Head of caudate nucleus (tissue), 42 donors: ENCODE measurements at regions of chr10 and their contacts with region 1.

Region 1: DNA sequence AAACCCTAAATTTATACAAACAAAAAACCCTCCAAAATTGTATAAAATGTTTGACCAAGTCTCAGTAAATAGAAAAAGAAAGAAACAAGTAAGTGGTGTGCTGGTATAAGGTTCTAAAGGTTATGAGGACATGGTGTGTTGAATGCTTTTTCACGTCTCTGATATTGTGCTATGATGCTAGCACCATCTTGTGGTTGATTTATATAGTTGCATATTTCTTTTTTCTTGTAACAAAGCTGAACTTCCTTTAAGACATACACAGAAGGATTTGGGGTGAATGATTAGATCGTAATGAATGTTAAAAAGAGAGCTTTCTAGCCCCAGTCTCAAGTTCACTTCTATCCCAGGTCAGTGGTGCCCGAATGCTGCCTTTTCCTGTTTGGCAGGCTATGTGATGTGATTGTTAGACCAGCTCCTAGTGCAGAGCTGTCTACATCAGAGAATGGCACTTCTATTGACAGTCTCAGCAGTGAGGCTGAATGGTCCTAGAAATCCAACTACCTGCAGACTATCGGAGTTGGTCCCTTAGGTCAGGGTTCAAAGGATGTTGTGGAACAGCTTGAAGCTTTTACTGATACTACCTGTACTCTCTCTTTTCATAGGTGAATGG is 25.0 kb downstream of the VTI1A start:
- DNase-seq: peak in 3 of 42 donors; percentile 10 to 15 (median 14)

Region 2: DNA sequence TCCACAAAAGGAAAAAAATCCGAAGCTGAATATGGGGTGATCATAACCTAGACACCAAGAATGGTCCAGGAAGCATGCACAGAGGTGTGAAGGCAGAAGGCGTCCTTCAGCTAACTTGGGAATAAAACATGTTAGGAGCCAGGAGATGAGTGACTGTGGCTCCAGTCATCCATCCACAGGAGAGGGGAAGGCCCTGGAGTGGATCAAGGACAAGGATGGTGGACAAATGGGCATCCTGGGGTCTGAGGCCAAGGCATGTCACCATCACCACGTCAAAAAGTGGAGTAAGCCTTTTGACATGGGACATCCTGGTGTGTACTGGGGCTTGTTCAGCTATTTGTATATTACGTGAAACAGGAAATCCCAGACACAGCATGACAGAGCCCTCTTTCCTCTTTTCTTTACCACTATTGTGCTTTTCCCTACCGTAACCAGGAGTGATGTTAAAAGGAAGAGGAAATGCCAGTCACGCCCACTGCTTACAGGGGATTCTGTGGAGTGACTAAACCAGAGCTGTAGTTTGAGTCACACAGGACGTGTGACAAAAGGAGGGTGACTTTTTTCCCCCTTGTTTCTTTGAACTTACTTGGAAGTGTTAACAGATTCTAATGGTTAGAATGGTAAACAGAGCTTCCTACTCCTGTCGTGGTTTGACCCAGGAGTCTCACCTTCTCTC is 82.7 kb before region 1 on chr10:
- intact Hi-C with region 1: no loop called
- DNase-seq: peak in 16 of 42 donors; percentile 9 to 71 (median 26)

Region 3: DNA sequence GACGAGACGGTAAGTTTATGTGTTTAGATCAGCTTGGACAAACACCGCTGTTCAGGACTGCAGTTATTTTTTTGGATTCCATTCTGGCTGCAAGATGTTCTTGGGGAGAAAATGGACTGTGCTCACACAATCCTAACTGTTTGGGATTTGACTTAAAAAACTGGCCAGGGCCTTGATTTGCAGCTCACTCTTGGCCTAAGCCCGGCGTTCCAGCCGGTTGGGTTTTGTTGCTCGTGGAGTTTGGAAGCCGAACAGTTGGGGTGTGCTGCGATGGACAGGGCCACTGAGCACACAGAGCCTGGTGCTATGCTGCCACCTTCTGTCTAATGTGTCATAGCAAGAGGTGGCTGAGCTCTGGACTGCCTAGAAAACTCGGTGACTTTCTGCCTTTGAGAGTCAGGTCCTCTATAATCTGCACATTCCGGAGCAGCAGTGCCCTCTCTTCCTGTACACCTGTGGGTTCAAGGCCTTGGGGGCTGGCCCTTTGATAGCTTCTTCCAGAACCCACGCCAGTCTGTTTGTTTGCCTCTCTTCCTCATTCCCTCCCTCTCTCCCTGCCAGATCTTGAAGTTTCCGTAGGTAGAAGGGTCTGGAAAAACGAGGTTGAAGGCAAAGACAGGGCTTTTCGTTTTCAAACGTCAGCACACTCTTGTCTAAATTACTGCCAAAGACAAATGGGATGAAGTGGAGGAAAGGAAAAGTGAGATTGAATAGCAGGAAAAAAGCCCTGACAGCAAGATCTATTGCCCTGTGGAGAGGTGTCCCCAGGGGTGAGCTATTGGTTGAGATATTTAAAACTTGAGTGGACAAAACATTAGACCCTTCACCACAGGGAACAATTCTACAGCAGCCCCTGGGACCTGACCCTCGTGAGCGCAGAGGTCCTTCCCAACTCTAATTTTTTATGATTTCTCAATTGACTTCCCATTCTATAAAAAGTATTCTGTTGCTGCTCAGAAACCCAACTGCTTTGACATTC is 913.3 kb after region 1 on chr10:
- intact Hi-C with region 1: loop called (anchors 10 kb)
- DNase-seq: peak; percentile 63 to 94 (median 83)